CD8-positive, alpha-beta memory T cell (primary cell): ENCODE measurements at regions of chr4 and their contacts with region 1.

Region 1: DNA sequence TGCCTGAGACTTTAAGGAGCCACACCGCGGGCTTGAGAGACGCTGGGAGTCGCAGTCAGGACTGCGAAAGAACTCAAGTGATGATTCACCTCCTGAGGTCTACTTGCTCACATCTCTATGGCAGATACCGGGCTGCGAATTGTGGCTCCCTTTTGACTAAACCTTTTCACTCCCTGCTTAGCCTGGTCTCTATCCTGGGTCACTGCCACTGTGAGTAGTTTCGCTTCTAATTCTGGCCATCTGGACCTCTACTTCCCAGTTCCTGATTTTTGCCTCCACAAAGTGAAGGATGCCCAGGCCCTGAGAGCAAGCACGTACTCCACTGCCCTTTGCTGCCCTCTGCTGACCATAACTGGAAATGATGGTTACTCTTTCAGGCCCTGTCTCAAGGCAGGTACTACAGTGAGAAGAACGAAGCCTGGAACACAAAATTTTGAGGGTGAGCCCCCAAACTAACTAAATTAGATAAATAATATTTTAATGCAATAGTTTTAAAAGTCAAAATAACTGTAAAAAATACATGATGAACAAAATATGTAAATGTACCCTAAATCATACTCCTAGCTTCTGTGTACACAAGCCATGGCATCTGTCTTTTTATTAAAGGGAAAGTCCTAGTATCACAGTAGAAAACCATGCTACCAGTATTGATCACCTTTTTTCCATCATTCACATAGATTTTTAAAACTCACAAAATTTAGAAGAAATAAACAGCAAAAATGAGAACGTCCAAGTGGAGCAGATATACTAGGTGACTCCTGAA is 16.7 kb downstream of the MAD2L1 start:
- DNase-seq: peak; percentile 51 to 72 (median 61)
- H3K4me3 ChIP-seq: no peak overlapping the region
- H3K4me3 Mint-ChIP-seq: peak overlapping the region in 3 of 7 donors; percentile 64 to 84 (median 66)
- H3K27ac ChIP-seq: no peak overlapping the region
- H3K27ac Mint-ChIP-seq: peak overlapping the region in 1 of 8 donors; percentile 69
- H3K4me1 ChIP-seq: no peaks in the 10 kb centered on the region
- H3K4me1 Mint-ChIP-seq: peaks cover 2 to 5% (median 3%) of the 10 kb centered on the region in 3 donors
- H3K27me3 ChIP-seq: no peaks in the 10 kb centered on the region
- H3K27me3 Mint-ChIP-seq: no peaks in the 10 kb centered on the region

Region 2: DNA sequence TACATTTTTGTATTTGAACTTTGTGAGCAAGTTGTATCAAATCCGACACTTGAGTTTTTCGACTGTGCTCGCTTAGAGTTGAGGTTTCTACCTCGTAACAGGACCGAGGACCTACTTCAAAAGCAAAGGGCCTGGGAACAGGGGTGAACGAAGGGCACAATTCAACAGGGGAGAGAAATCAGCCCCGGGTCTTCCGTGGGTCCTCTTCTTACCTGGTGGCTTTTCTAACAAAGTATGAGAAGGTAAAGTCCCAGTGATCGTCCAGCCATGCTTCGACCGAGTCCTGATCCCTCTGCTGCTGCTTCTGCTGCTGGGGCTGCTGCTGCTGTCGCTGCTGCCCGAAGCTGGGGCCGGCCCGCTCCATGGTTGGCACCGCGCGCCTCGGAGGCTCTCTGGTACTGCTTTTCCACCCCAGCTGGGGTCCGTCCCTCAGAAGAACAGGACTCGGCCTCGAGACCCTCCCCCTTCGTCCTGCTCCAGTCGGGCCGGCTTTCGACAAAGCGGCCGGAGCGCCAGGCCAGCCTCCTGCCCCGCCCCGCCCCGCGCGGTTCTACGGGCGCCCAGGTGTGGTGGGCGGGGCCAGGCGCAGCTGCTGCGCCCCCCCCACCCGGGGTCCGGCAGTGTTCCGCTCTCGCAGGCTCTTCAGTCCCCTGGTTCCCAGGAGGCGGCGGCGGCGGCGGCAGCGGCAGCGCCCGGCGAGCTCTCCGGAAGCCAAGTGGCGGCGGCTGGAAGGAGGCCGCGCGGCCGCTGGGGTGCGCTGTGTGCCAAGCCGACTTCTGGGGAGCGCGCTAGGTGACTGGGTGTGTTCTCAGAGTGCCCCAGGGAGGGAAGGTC is 421.4 kb before region 1 on chr4 and contains the start of gene PDE5A:
- CTCF ChIA-PET with region 1: interaction called, 14 read pairs
- POLR2A ChIA-PET with region 1: no interaction called
- DNase-seq: peak; percentile 62 to 83 (median 69)
- H3K4me3 ChIP-seq: peak within 1 kb of the TSS; percentile 81
- H3K4me3 Mint-ChIP-seq: peak within 1 kb of the TSS; percentile 86 to 96 (median 91)
- H3K27ac ChIP-seq: no peak within 1 kb of the TSS
- H3K27ac Mint-ChIP-seq: peak within 1 kb of the TSS; percentile 58 to 89 (median 82)
- H3K4me1 ChIP-seq: peaks cover 14% of the 10 kb centered on the region
- H3K4me1 Mint-ChIP-seq: peaks cover 14 to 31% (median 20%) of the 10 kb centered on the region in 3 donors
- H3K27me3 ChIP-seq: no peaks in the 10 kb centered on the region
- H3K27me3 Mint-ChIP-seq: peaks cover 12 to 14% of the 10 kb centered on the region in 2 donors
- total RNA-seq, gene PDE5A: 0.20 to 0.44 TPM

Region 3: GRCh38 chr4:119939071-119939995 is 110.6 kb before region 1 on chr4:
- CTCF ChIA-PET with region 1: no interaction called
- POLR2A ChIA-PET with region 1: no interaction called
- DNase-seq: no peak
- H3K4me3 ChIP-seq: no peak overlapping the region
- H3K4me3 Mint-ChIP-seq: no peak overlapping the region
- H3K27ac ChIP-seq: no peak overlapping the region
- H3K27ac Mint-ChIP-seq: no peak overlapping the region
- H3K4me1 ChIP-seq: no peaks in the 10 kb centered on the region
- H3K4me1 Mint-ChIP-seq: no peaks in the 10 kb centered on the region
- H3K27me3 ChIP-seq: no peaks in the 10 kb centered on the region
- H3K27me3 Mint-ChIP-seq: peaks cover 3 to 6% of the 10 kb centered on the region in 2 donors

Region 4: GRCh38 chr4:120034913-120035312 is 15.0 kb before region 1 on chr4:
- CTCF ChIA-PET with region 1: no interaction called
- POLR2A ChIA-PET with region 1: no interaction called
- DNase-seq: no peak
- H3K4me3 ChIP-seq: no peak overlapping the region
- H3K4me3 Mint-ChIP-seq: no peak overlapping the region
- H3K27ac ChIP-seq: no peak overlapping the region
- H3K27ac Mint-ChIP-seq: no peak overlapping the region
- H3K4me1 ChIP-seq: no peaks in the 10 kb centered on the region
- H3K4me1 Mint-ChIP-seq: no peaks in the 10 kb centered on the region
- H3K27me3 ChIP-seq: no peaks in the 10 kb centered on the region
- H3K27me3 Mint-ChIP-seq: peaks cover 12 to 47% of the 10 kb centered on the region in 2 donors

Region 5: GRCh38 chr4:120348521-120348920 is 298.6 kb after region 1 on chr4:
- CTCF ChIA-PET with region 1: no interaction called
- POLR2A ChIA-PET with region 1: no interaction called
- DNase-seq: no peak
- H3K4me3 ChIP-seq: no peak overlapping the region
- H3K4me3 Mint-ChIP-seq: no peak overlapping the region
- H3K27ac ChIP-seq: no peak overlapping the region
- H3K27ac Mint-ChIP-seq: no peak overlapping the region
- H3K4me1 ChIP-seq: no peaks in the 10 kb centered on the region
- H3K4me1 Mint-ChIP-seq: no peaks in the 10 kb centered on the region
- H3K27me3 ChIP-seq: no peaks in the 10 kb centered on the region
- H3K27me3 Mint-ChIP-seq: peaks cover 3 to 7% of the 10 kb centered on the region in 2 donors